Spleen (tissue), 13 donors: ENCODE measurements at regions of chrX and their contacts with region 1.

Region 1: DNA sequence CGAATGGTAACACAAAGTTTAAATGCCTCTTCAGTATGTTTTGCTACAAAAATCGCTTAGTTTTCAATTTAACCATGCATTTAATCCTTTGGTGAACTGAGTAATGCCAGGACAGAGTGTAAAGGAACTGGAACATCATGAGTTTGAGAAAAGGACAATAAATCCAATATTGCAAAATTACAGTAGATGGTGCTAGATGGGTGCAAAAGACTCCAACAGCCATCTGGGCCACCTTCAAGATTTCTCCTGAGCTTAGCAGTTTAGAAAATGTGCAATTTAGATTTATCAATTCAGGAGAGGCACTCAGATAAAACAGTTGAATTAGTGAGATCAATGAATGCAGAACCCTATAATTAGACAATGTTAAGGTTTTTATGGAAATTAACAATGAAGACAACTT is 33.2 kb upstream of the MID1IP1 start:
- DNase-seq: no peak
- H3K4me3 ChIP-seq: no peak overlapping the region
- H3K27ac ChIP-seq: no peak overlapping the region
- H3K4me1 ChIP-seq: no peaks in the 10 kb centered on the region
- H3K27me3 ChIP-seq: no peaks in the 10 kb centered on the region
- CTCF ChIP-seq: peak in 6 of 11 experiments; percentile 18 to 41 (median 26)
- POLR2A ChIP-seq: no peak

Region 2: GRCh38 chrX:38985375-38985774 is 217.3 kb after region 1 on chrX:
- intact Hi-C with region 1: loop called (anchors 10 kb)
- DNase-seq: no peak
- H3K4me3 ChIP-seq: no peak overlapping the region
- H3K27ac ChIP-seq: no peak overlapping the region
- H3K4me1 ChIP-seq: no peaks in the 10 kb centered on the region
- H3K27me3 ChIP-seq: peaks cover 0 to 3% (median 0%) of the 10 kb centered on the region in 7 donors
- CTCF ChIP-seq: peak in 5 of 11 experiments; percentile 7 to 34 (median 25)
- POLR2A ChIP-seq: no peak